Activated CD4-positive, alpha-beta T cell treated with anti-CD3 and anti-CD28 coated beads for 36 hours (primary cell): ENCODE measurements at regions of chr20 and their contacts with region 1.

Region 1: DNA sequence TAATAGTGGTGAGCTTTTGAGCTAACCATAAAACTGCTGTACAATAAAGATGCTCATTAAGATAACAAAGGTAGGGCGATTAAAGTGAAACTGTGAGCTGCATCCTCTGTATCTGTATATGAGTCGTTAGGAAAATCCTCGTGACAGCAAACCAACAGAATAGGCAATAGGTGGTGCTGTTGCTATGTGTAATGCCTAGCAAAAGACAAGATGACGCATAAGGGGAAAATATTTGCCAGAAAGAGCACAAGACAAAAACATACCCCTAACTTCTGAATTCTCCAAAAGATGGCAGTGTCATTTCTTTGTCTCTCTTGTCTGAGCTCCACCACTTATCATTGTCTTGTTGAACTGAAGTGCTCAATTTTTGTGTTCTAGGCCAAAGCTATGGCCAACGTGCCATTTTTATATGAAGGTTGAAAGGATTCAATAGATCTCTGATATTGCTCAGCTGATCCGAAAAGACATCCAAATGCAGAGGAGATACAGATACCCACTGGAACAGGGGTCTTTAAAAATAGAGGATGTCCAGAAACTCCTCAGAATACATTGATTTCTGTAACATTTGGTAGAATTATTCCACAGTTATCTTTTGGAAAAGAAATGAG is 56.3 kb upstream of the ANKEF1 start:
- DNase-seq: peak; percentile 38
- ATAC-seq: peak; percentile 95
- H3K4me3 Mint-ChIP-seq: no peak overlapping the region
- H3K27ac Mint-ChIP-seq: no peak overlapping the region
- H3K4me1 Mint-ChIP-seq: peaks cover 2% of the 10 kb centered on the region
- H3K27me3 Mint-ChIP-seq: peaks cover 1% of the 10 kb centered on the region

Region 2: GRCh38 chr20:9989066-9989724 is 10.7 kb after region 1 on chr20:
- CTCF ChIA-PET with region 1: interaction called, 10 read pairs
- POLR2A ChIA-PET with region 1: interaction called, 3 read pairs
- intact Hi-C with region 1: no loop called
- DNase-seq: no peak
- ATAC-seq: no peak
- H3K4me3 Mint-ChIP-seq: no peak overlapping the region
- H3K27ac Mint-ChIP-seq: no peak overlapping the region
- H3K4me1 Mint-ChIP-seq: no peaks in the 10 kb centered on the region
- H3K27me3 Mint-ChIP-seq: peaks cover 13% of the 10 kb centered on the region

Region 3: GRCh38 chr20:10219452-10219791 is 240.9 kb after region 1 on chr20:
- CTCF ChIA-PET with region 1: interaction called, 4 read pairs
- POLR2A ChIA-PET with region 1: no interaction called
- intact Hi-C with region 1: loop called (anchors 5 to 10 kb)
- DNase-seq: peak; percentile 85
- ATAC-seq: no peak
- H3K4me3 Mint-ChIP-seq: no peak overlapping the region
- H3K27ac Mint-ChIP-seq: no peak overlapping the region
- H3K4me1 Mint-ChIP-seq: peaks cover 14% of the 10 kb centered on the region
- H3K27me3 Mint-ChIP-seq: peaks cover 46% of the 10 kb centered on the region

Region 4: DNA sequence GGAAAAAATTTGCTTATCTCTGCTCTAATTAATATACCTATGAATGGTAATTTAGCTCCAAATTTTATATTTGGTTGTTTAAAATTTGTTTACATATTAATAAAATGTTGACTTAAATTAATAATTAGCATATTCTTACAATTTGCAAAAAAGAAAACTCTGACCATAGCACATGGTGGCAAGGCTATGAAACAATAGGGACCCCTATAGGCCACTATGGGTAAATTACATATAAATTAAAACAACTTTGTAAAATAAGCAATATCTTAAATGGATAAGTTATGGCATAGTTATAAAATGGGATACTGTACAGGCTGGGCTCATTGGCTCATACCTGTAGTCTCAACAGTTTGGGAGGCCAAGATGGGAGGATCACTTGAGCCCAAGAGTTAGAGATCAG is 379.5 kb after region 1 on chr20:
- CTCF ChIA-PET with region 1: no interaction called
- POLR2A ChIA-PET with region 1: no interaction called
- intact Hi-C with region 1: loop called in 1 of 2 experiments (anchors 5 kb)
- DNase-seq: no peak
- ATAC-seq: no peak
- H3K4me3 Mint-ChIP-seq: no peak overlapping the region
- H3K27ac Mint-ChIP-seq: no peak overlapping the region
- H3K4me1 Mint-ChIP-seq: peaks cover 4% of the 10 kb centered on the region
- H3K27me3 Mint-ChIP-seq: no peaks in the 10 kb centered on the region

Region 5: DNA sequence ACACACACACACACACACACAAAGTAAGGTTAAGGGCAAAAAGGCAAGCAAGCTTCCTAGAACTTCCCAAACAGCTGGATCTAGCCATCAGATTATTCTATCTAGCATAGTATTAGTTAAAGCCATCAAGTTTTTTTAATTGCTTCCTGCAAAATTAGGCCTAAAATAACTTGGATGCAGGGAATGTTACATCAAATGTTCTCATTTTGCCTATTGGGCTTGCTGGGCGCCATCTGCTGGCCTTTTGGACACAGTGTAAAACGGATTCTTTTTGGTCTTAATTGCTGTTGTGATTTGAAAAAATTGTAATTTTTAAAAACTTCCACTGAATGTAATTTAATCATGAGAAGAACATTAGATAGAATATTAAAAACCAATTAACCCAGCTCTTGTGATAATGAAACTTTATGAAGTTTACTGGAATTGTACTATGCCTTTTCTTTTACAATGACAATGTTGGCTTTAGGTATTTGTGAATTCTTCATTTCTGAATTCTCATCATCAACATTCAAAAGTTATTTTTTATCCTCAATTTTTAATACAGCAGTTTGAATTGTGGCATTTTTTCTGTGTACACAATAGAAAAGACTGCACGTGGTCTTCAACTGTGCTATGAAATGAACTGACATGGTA is 448.7 kb after region 1 on chr20:
- CTCF ChIA-PET with region 1: interaction called, 29 read pairs
- POLR2A ChIA-PET with region 1: no interaction called
- intact Hi-C with region 1: loop called (anchors 1 kb)
- DNase-seq: peak; percentile 66
- ATAC-seq: no peak
- H3K4me3 Mint-ChIP-seq: no peak overlapping the region
- H3K27ac Mint-ChIP-seq: no peak overlapping the region
- H3K4me1 Mint-ChIP-seq: peaks cover 41% of the 10 kb centered on the region
- H3K27me3 Mint-ChIP-seq: no peaks in the 10 kb centered on the region

Region 6: DNA sequence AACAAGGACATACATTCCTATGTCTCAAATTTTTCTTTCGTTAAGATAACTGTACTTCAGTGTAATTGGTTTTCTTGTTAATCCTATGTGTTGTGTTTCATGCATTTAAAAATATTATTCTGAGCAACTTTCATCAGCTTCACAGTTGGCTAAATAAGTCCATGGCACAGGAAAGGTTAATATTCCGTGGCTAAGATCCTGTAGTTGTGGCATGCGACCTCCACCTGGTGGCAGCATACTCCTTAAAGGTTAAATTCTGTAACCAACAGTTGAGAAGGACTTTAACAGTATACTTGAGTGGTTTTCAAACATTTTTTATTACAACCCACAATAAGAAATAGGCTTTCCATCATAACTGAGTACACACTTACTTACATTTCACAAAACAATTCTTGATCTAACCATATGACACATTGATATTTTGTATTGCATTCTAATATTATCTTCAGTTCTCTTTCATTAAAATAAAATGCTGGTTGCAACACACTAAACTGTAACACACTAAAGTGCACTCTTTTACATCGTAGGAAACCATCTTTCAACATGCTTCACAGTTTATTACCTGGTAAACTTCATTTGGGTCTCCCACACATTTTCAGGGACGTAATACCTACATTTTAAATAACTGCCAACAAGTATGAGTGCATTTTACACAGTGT is 575.0 kb after region 1 on chr20:
- CTCF ChIA-PET with region 1: no interaction called
- POLR2A ChIA-PET with region 1: no interaction called
- intact Hi-C with region 1: loop called in 1 of 2 experiments (anchors 1 kb)
- DNase-seq: peak; percentile 70
- ATAC-seq: peak; percentile 45
- H3K4me3 Mint-ChIP-seq: no peak overlapping the region
- H3K27ac Mint-ChIP-seq: no peak overlapping the region
- H3K4me1 Mint-ChIP-seq: peaks cover 38% of the 10 kb centered on the region
- H3K27me3 Mint-ChIP-seq: no peaks in the 10 kb centered on the region

Region 7: DNA sequence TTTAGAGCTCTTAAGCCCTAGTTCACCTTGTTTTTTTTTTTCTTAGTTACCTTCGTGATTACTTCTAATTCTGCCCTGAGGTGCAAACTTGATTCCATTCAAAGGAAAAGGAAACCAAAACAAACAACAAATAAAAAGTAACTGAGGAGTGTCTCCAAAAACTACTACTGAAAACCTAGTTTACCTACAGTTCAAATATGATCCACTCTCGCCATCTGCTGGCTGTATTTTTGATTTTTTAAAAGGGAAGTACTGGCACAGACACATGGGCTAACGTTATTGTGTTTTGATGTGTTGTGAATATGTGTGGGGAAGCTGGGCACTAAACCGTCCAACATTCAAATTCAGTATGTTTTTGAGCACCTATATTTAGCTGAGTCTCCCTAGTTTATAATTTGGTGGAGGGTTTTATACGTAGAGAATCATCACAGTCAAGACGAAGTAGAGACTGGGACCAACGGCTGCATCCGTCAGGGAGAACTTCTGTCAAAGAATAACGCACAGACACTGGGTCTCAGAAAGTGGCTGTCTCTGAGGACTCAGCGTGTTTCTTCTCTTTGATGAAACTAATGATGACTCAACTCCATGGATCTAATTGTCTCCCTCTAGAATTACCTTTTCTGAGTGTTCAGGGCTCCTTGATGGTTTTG is 1565.7 kb after region 1 on chr20:
- CTCF ChIA-PET with region 1: interaction called, 3 read pairs
- POLR2A ChIA-PET with region 1: no interaction called
- intact Hi-C with region 1: loop called in 1 of 2 experiments (anchors 1 kb)
- DNase-seq: peak; percentile 25
- ATAC-seq: no peak
- H3K4me3 Mint-ChIP-seq: no peak overlapping the region
- H3K27ac Mint-ChIP-seq: no peak overlapping the region
- H3K4me1 Mint-ChIP-seq: no peaks in the 10 kb centered on the region
- H3K27me3 Mint-ChIP-seq: no peaks in the 10 kb centered on the region